GM13977 (cell line): ENCODE measurements at regions of chrX and their contacts with region 1.

Region 1: GRCh38 chrX:151082076-151082948 is 94.1 kb upstream of the GPR50 start:
- DNase-seq: peak; percentile 69
- CTCF ChIP-seq: peak; percentile 91

Region 2: DNA sequence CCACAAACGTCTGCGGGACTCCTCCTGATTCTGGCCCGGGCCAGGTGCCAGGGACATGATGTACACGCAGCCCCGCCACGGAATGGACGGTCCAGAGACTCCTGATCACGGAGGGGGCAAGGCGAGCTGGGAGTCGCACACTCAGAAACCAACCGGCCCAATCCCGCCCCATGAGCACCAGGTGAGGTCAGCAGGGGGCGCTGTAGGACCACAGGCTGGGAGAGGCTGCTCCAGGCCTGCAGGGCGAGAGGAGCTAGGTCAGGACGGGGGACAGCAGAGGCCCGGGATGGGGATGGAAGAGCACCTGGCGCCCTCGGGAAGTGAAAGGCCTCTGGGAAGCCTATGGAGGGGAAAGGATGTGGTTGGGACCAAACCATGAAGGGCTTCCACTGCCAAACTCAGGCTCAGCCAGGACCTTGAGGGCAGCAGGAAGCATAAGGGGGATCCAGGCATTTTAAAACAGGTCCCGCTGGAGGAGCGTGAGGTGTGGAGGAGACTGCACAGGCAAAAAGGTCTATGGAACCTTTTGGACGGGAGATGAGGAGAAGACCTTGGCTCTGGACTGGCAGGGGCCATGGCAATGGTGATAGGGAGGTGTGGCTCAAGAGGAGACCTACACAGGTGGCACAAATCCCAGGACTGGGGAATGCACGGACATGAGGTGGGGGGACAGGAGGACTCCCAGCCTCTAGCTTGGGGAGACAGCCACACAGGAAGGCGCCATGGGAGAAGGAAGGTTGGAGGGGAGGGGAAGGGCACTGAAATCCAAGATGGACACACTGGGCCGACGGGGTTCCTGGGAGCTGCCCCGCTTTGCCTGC is 310.0 kb before region 1 on chrX:
- in situ Hi-C with region 1: loop called (anchors 10 kb)
- DNase-seq: peak; percentile 82
- CTCF ChIP-seq: peak; percentile 88